ENCODE measurements at regions of chr15 and their contacts with region 1.

Region 1: GRCh38 chr15:78018946-78019644 is 58.4 kb downstream of the TBC1D2B start:
- DNase-seq: no peak
- ATAC-seq: peak; percentile 97
- H3K4me3 ChIP-seq: no peak overlapping the region
- H3K27ac ChIP-seq: peak overlapping the region; percentile 60
- H3K4me1 ChIP-seq: peaks cover 7% of the 10 kb centered on the region
- H3K27me3 ChIP-seq: no peaks in the 10 kb centered on the region
- CTCF ChIP-seq: no peak
- EP300 ChIP-seq: no peak
- POLR2A ChIP-seq: no peak
- RAD21 ChIP-seq: no peak

Region 2: GRCh38 chr15:77983708-77984445 is 35.2 kb before region 1 on chr15:
- CTCF ChIA-PET with region 1: no interaction called
- POLR2A ChIA-PET with region 1: no interaction called
- RAD21 ChIA-PET with region 1: no interaction called
- SMC1A ChIA-PET with region 1: no interaction called
- in situ Hi-C with region 1: no loop called
- intact Hi-C with region 1: no loop called
- DNase-seq: no peak
- ATAC-seq: peak; percentile 19; the same call in 1 of the 3 replicates
- H3K4me3 ChIP-seq: no peak overlapping the region
- H3K27ac ChIP-seq: no peak overlapping the region
- H3K4me1 ChIP-seq: no peaks in the 10 kb centered on the region
- H3K27me3 ChIP-seq: no peaks in the 10 kb centered on the region
- CTCF ChIP-seq: peak in 1 of 3 experiments; percentile 11; a peak in 1 of 6 replicates
- EP300 ChIP-seq: no peak
- POLR2A ChIP-seq: no peak
- RAD21 ChIP-seq: no peak

Region 3: DNA sequence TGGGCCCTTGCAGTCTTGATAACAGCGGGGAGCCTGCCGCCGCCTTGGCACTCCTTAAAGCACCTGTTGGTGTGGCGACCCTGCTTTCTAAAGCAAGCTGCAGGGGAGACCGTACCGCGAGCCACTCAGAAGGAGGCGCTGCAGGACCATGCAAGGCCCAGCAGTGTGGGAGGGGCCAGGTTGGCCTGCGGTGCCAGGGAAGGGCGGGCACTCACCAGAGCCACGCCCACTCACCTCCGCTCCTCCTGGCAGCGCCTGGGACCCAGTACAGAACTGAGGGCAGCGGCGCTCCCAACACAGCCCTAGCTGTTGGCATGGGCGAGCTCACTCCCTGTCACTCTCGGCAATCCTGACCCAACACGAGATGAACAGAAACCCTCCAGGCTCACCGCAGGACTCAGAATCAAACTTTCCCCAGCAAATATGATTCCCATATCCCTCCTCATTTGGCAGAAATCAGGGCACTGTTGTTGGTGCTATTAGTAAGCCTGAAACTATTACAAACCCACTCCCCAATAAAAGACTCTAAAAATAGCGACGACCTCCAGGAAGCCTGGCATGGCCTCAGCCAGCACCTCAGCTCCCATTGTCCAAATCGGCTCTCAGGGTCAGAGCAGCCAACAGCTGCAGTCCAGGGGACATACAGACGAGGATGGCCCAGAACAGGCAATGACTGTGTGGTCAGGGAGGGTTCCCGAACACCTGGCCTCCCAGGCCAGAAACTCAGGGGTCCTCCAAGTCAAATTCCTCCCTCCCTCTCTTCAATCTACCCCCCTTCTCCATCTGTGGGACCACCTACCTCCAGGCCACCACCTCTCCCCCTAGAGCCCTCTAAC is 18.8 kb before region 1 on chr15:
- CTCF ChIA-PET with region 1: interaction called, 10 read pairs
- POLR2A ChIA-PET with region 1: interaction called, 3 read pairs
- RAD21 ChIA-PET with region 1: interaction called, 7 read pairs
- SMC1A ChIA-PET with region 1: interaction called, 5 read pairs
- in situ Hi-C with region 1: no loop called
- intact Hi-C with region 1: no loop called
- DNase-seq: no peak
- ATAC-seq: peak; percentile 87
- H3K4me3 ChIP-seq: no peak overlapping the region
- H3K27ac ChIP-seq: no peak overlapping the region
- H3K4me1 ChIP-seq: peaks cover 16% of the 10 kb centered on the region
- H3K27me3 ChIP-seq: no peaks in the 10 kb centered on the region
- CTCF ChIP-seq: peak; percentile 62 to 82 (median 72)
- EP300 ChIP-seq: no peak
- POLR2A ChIP-seq: no peak
- RAD21 ChIP-seq: peak; percentile 82

Region 4: GRCh38 chr15:78034495-78035191 is 15.5 kb after region 1 on chr15:
- CTCF ChIA-PET with region 1: interaction called, 27 read pairs
- POLR2A ChIA-PET with region 1: interaction called, 6 read pairs
- RAD21 ChIA-PET with region 1: interaction called, 18 read pairs
- SMC1A ChIA-PET with region 1: interaction called, 55 read pairs
- in situ Hi-C with region 1: no loop called
- intact Hi-C with region 1: no loop called
- DNase-seq: peak; percentile 66
- ATAC-seq: peak; percentile 92
- H3K4me3 ChIP-seq: no peak overlapping the region; the same call in 1 of the 2 replicates
- H3K27ac ChIP-seq: peak overlapping the region; percentile 4
- H3K4me1 ChIP-seq: peaks cover 40% of the 10 kb centered on the region
- H3K27me3 ChIP-seq: no peaks in the 10 kb centered on the region
- CTCF ChIP-seq: peak in 1 of 3 experiments; percentile 14; a peak in 1 of 6 replicates
- EP300 ChIP-seq: 0 out of 4 replicates have a peak, but pooled peaks of 1 of the 2 experiments have one; percentile 26
- POLR2A ChIP-seq: no peak
- RAD21 ChIP-seq: peak; percentile 24; the same call in 1 of the 2 replicates

Region 5: DNA sequence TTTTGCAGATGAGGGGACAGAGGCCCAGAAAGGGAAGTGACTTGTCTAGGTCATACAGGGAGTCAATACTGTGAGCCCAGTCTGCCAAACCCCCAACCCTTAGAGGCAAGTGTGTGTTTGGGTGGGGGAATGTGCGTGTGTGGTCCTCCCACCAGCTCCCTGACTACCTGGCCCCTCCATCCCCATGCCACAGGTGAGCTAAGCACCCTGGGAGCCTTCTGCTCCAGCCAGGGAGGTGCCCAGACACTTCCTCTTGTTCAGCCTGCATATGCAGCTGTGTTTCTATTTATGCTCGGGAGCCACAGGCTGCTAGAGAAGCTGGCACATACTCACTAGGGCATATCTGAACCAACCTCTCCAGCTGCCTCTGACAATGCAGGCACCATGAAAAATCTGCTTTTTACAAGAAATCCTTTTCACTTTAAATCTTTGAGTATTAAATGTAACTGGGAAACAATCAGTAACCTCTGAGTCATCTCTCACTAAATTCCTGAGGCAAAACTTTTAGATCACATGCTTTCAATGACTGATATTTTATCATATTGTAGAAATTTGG is 37.7 kb after region 1 on chr15:
- CTCF ChIA-PET with region 1: interaction called, 5 read pairs
- POLR2A ChIA-PET with region 1: no interaction called
- RAD21 ChIA-PET with region 1: interaction called, 18 read pairs
- SMC1A ChIA-PET with region 1: interaction called, 12 read pairs
- in situ Hi-C with region 1: no loop called
- intact Hi-C with region 1: no loop called
- DNase-seq: no peak
- ATAC-seq: peak; percentile 78
- H3K4me3 ChIP-seq: no peak overlapping the region
- H3K27ac ChIP-seq: peak overlapping the region; percentile 57
- H3K4me1 ChIP-seq: peaks cover 63% of the 10 kb centered on the region
- H3K27me3 ChIP-seq: no peaks in the 10 kb centered on the region
- CTCF ChIP-seq: no peak
- EP300 ChIP-seq: no peak
- POLR2A ChIP-seq: no peak
- RAD21 ChIP-seq: no peak

Measured in GM12878 (cell line).